ENCODE measurements at regions of chr14 and their contacts with region 1.

Region 1: GRCh38 chr14:106790189-106791036 is 1264.0 kb downstream of the TMEM121 start:
- DNase-seq: peak; percentile 79 to 86 (median 86)
- H3K4me3 ChIP-seq: no peak overlapping the region
- H3K27ac ChIP-seq: no peak overlapping the region
- H3K4me1 ChIP-seq: peaks cover 12 to 50% (median 24%) of the 10 kb centered on the region in 4 experiments
- H3K27me3 ChIP-seq: no peaks in the 10 kb centered on the region

Region 2: DNA sequence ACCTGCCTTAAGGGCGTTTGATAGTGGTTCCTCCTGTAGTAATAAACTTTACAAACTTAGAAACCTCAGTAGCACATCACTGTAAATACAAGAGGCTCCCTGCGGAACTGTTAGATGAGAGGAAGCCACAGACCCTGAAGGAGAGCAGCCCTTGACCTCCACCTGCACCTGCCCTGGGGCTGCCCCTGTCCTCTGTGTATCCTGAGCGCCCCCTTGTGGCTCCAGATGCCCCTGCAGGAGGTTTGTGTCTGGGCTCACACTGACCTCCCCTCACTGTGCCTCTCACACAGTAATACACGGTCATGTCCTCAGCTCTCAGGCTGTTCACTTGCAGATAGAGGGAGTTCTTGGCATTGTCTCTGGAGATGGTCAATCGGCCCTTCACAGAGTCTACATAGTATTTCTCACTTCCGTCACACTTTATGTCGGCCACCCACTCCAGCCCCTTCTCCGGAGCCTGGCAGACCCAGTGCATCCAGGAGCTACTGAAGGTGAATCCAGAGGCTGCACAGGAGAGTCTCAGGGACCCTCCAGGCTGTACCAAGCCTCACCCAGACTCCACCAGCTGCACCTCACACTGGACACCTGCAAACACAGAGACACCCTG is 204.2 kb before region 1 on chr14:
- CTCF ChIA-PET with region 1: no interaction called
- POLR2A ChIA-PET with region 1: no interaction called
- DNase-seq: peak; percentile 35 to 63 (median 53)
- H3K4me3 ChIP-seq: no peak overlapping the region
- H3K27ac ChIP-seq: no peak overlapping the region
- H3K4me1 ChIP-seq: peaks cover 0 to 19% (median 10%) of the 10 kb centered on the region in 4 experiments
- H3K27me3 ChIP-seq: peaks cover 0 to 2% (median 0%) of the 10 kb centered on the region in 5 experiments

Region 3: DNA sequence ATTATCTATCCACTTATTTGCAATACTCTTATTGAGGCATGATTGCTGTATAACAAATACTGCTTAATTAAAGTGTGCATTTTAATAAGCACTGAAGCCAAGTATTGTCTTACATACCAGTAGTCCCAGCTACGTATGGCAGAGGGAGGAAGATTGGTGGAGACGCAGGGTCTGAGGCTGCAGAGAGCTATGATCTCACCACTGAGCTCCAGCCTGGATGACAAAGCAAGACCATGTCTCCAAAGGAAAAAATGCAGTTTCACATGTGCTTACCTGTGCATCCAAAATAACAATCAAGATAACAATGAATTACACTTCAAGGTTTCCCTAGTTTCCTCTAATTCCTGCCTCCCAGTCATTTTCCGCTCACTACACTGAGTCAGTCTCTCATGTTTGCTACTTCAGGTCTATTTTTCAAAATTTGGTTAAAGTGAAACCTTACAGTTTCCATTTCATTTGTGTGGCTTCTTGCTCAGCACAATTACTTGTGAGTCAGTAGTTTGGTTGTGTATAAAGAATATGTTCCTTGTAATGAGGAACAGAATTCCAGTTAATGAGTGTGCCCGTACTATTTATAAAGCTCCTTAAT is 13.9 kb before region 1 on chr14:
- CTCF ChIA-PET with region 1: interaction called, 15 read pairs
- POLR2A ChIA-PET with region 1: no interaction called
- DNase-seq: no peak
- H3K4me3 ChIP-seq: no peak overlapping the region
- H3K27ac ChIP-seq: no peak overlapping the region
- H3K4me1 ChIP-seq: peaks cover 2 to 17% (median 7%) of the 10 kb centered on the region in 4 experiments
- H3K27me3 ChIP-seq: no peaks in the 10 kb centered on the region

Region 4: GRCh38 chr14:106802423-106803364 is 12.3 kb after region 1 on chr14:
- CTCF ChIA-PET with region 1: interaction called, 12 read pairs
- POLR2A ChIA-PET with region 1: no interaction called
- DNase-seq: peak; percentile 15 to 36 (median 25)
- H3K4me3 ChIP-seq: peak overlapping the region in 2 of 7 experiments; percentile 28 to 43
- H3K27ac ChIP-seq: no peak overlapping the region
- H3K4me1 ChIP-seq: no peaks in the 10 kb centered on the region
- H3K27me3 ChIP-seq: peaks cover 0 to 2% (median 0%) of the 10 kb centered on the region in 5 experiments

Measured in common myeloid progenitor, CD34-positive (primary cell).